MCF 10A (cell line): ENCODE measurements at regions of chr1 and their contacts with region 1.

Region 1: DNA sequence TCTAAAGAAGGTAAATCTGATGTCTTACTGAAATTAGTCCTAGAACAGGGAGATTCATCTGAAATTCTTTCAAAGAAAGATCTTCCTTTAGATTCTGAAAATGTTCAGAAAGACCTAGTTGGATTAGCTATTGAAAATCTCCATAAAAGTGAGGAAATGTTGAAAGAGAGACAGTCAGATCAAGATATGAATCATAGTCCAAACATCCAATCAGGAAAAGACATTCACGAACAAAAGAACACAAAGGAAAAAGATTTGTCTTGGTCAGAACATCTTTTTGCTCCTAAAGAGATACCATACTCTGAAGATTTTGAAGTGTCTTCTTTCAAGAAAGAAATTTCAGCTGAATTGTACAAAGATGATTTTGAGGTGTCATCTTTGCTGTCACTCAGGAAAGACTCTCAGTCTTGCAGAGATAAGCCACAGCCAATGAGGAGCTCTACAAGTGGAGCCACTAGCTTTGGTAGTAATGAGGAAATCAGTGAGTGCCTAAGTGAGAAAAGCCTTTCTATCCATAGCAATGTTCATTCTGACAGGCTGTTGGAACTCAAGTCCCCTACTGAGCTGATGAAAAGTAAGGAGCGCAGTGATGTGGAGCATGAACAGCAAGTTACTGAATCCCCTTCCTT is 61.6 kb upstream of the QSOX1 start:
- DNase-seq: peak; percentile 16
- H3K4me3 Mint-ChIP-seq: no peak overlapping the region
- H3K27ac Mint-ChIP-seq: peak overlapping the region; percentile 42
- H3K4me1 Mint-ChIP-seq: peaks cover 7% of the 10 kb centered on the region
- H3K27me3 Mint-ChIP-seq: no peaks in the 10 kb centered on the region
- CTCF ChIP-seq: no peak

Region 2: DNA sequence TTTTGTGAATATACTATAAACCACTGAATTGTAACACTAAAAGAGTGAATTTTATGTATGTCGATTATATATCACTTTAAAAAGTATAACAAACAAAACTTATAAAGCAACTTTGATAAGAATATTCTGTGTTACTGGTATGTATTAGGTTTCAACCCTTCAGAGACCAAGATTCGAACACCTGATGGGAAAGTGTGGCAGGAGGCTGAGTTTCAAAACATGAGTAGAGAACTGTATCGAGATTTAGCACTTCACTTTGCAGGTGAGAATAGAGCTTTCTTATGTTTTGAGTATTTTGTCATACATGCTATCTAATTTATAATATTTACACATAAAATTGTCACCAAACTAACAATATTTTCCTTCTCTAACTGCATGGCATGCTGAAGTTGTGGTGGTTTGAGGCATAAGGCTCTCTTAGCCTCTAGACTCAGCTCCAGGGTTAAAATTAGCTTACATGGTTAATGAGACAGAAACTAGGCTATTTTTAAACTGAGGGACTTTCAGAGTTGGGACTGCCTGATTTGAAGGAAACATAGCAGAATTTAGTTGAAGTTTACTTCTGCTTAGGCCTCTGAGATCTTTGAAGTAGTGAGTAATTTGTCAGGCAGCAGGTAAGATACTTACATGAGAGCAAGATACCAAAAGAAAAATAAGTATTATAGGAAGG is 89.9 kb before region 1 on chr1:
- CTCF ChIA-PET with region 1: no interaction called
- POLR2A ChIA-PET with region 1: no interaction called
- intact Hi-C with region 1: no loop called
- DNase-seq: no peak
- H3K4me3 Mint-ChIP-seq: no peak overlapping the region
- H3K27ac Mint-ChIP-seq: no peak overlapping the region
- H3K4me1 Mint-ChIP-seq: peaks cover 6% of the 10 kb centered on the region
- H3K27me3 Mint-ChIP-seq: no peaks in the 10 kb centered on the region
- CTCF ChIP-seq: no peak

Region 3: DNA sequence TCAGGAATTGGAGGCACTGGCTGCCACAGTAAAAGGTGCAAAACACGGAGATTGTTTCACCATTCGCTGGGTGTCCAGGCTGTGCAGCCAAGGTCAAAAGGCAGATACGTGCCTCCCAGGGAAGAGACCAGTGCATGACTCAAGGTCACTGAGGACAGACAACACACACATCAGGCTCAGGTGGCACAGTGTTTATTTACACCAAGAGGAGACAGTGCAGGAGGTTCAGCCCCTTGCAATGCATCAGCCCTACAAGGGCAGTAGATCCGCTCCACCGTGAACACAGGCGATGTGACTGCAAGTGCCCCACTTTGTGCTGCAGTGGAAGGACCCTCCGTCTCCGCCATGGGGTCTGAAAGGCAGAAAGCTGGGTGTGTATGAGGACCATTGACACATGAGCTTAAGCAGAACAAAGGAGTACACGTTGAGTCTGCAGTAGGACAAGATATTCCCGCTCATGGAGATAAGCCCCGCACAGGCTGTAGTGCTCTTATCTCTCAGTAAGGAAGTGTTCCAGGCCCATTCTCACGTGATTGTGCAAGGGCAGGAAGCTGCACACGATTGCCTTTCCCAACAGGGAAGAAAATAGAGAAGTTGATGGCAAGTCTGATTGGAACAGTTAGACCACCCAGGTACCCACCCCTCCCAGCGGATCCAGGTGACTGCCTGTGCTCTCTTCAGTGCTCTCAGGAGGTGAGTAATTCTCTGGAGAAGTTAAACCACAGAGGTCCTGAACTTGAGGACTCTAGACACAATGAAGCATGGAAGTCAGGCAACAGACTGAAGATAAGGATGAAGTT is 24.1 kb after region 1 on chr1:
- CTCF ChIA-PET with region 1: interaction called, 4 read pairs
- POLR2A ChIA-PET with region 1: interaction called, 3 read pairs
- intact Hi-C with region 1: loop called (anchors 1 kb)
- DNase-seq: no peak
- H3K4me3 Mint-ChIP-seq: no peak overlapping the region
- H3K27ac Mint-ChIP-seq: peak overlapping the region; percentile 79
- H3K4me1 Mint-ChIP-seq: peaks cover 13% of the 10 kb centered on the region
- H3K27me3 Mint-ChIP-seq: no peaks in the 10 kb centered on the region
- CTCF ChIP-seq: no peak

Region 4: GRCh38 chr1:180123463-180123936 is 30.5 kb after region 1 on chr1:
- CTCF ChIA-PET with region 1: interaction called, 4 read pairs
- POLR2A ChIA-PET with region 1: interaction called, 3 read pairs
- intact Hi-C with region 1: loop called (anchors 1 kb)
- DNase-seq: peak; percentile 96
- H3K4me3 Mint-ChIP-seq: no peak overlapping the region
- H3K27ac Mint-ChIP-seq: peak overlapping the region; percentile 80
- H3K4me1 Mint-ChIP-seq: peaks cover 25% of the 10 kb centered on the region
- H3K27me3 Mint-ChIP-seq: no peaks in the 10 kb centered on the region
- CTCF ChIP-seq: no peak

Region 5: DNA sequence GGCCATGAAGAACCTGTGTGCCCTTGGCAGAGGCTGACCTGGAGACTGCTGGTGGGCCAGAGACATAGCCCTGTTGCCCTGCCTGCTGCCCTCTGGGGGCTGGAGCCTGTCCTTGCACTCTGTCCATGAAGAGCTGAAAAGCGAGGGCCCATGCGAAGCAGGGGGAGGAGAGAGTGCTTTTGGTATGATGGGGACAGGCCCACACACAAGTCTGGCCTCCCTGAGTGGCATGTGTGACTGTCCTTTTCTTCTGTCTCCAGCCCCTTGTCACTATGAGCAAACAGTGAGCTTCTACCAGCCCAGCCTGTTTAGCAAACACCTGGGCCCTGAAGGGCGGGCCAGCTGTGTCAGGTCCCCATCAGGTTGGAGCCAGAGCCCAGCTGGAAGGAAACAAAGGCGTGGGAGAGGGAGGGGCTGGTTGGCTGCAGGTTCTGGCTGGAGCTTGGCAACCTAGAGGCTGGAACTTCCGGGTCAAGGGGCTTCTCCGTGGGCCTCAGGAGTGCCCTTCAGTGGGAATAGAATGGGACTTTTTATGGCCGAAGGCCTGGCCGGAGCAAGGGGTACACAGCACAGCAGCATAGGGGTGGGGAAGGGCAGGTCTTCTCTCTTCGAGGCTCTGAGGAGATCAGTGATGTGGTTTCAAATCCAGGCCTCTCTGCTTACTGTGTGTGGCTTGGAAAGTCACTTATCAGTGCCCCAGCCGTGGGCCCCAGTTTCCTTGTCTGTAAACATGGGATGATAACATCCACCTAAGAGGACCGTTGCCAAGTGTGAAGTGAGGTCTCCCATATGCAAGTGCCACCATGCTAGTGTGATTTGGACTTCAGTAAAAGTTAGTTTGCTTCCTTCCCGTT is 76.0 kb after region 1 on chr1:
- CTCF ChIA-PET with region 1: interaction called, 6 read pairs
- POLR2A ChIA-PET with region 1: interaction called, 6 read pairs
- intact Hi-C with region 1: loop called (anchors 1 kb)
- DNase-seq: peak; percentile 69
- H3K4me3 Mint-ChIP-seq: no peak overlapping the region
- H3K27ac Mint-ChIP-seq: peak overlapping the region; percentile 77
- H3K4me1 Mint-ChIP-seq: peaks cover 29% of the 10 kb centered on the region
- H3K27me3 Mint-ChIP-seq: no peaks in the 10 kb centered on the region
- CTCF ChIP-seq: peak; percentile 47

Region 6: GRCh38 chr1:180252638-180253536 is 159.8 kb after region 1 on chr1:
- CTCF ChIA-PET with region 1: no interaction called
- POLR2A ChIA-PET with region 1: no interaction called
- intact Hi-C with region 1: no loop called
- DNase-seq: peak; percentile 84
- H3K4me3 Mint-ChIP-seq: no peak overlapping the region
- H3K27ac Mint-ChIP-seq: no peak overlapping the region
- H3K4me1 Mint-ChIP-seq: peaks cover 6% of the 10 kb centered on the region
- H3K27me3 Mint-ChIP-seq: peaks cover 5% of the 10 kb centered on the region
- CTCF ChIP-seq: peak; percentile 97